ENCODE measurements at regions of chr1 and their contacts with region 1.

Region 1: GRCh38 chr1:29181413-29182225 is at the start of gene SRSF4:
- DNase-seq: peak; percentile 98
- ATAC-seq: peak; percentile 91
- H3K4me3 ChIP-seq: peak within 1 kb of the TSS; percentile 90
- H3K27ac ChIP-seq: peak within 1 kb of the TSS; percentile 91
- H3K4me1 ChIP-seq: peaks cover 19% of the 10 kb centered on the region
- H3K27me3 ChIP-seq: no peaks in the 10 kb centered on the region
- CTCF ChIP-seq: peak; percentile 69
- total RNA-seq, gene SRSF4: 62.0 and 78.2 TPM in 2 replicates

Region 2: DNA sequence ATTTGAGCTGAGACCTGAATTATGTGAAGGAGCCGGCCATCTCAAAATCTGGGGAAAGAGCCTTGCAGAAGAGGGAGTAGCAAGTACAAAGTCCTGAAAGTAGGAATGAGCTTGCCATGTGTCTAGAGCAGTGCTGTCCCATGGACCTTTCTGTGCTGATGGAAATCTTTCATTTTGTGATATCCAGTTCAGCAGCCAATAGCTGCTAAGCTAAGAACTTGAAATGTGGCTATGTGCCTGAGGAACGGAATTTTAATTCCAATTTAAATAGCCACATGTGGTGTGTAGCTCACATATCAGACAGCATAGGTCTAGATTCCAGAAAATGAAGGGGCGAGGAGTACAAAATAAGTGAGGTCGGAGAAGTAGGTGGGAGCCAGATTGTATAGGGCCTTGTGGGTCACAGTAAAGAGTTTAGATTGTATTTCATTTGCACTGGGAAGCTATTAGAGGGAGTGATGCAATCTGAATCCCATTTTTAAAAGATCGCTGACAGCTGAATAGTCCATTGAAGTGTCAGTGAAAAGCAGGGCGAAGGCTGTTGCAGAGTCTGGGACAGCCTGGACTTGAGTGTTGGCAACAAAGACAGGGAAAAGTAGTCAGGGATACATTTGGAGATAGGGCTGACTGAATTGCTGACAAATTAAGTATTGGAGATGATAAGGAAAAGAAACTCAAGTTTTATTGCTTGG is 138.2 kb before region 1 on chr1:
- CTCF ChIA-PET with region 1: no interaction called
- POLR2A ChIA-PET with region 1: no interaction called
- intact Hi-C with region 1: loop called (anchors 10 kb)
- DNase-seq: no peak
- ATAC-seq: no peak
- H3K4me3 ChIP-seq: no peak overlapping the region
- H3K27ac ChIP-seq: no peak overlapping the region
- H3K4me1 ChIP-seq: no peaks in the 10 kb centered on the region
- H3K27me3 ChIP-seq: no peaks in the 10 kb centered on the region
- CTCF ChIP-seq: no peak

Region 3: GRCh38 chr1:29124366-29125236 is 57.0 kb before region 1 on chr1:
- CTCF ChIA-PET with region 1: interaction called, 4 read pairs
- POLR2A ChIA-PET with region 1: interaction called, 4 read pairs
- intact Hi-C with region 1: loop called (anchors 5 kb)
- DNase-seq: peak; percentile 58
- ATAC-seq: peak; percentile 32
- H3K4me3 ChIP-seq: peak overlapping the region; percentile 79
- H3K27ac ChIP-seq: no peak overlapping the region
- H3K4me1 ChIP-seq: peaks cover 18% of the 10 kb centered on the region
- H3K27me3 ChIP-seq: no peaks in the 10 kb centered on the region
- CTCF ChIP-seq: peak; percentile 53

Region 4: GRCh38 chr1:29197585-29197924 is 15.9 kb after region 1 on chr1:
- CTCF ChIA-PET with region 1: interaction called, 14 read pairs
- POLR2A ChIA-PET with region 1: interaction called, 12 read pairs
- intact Hi-C with region 1: loop called (anchors 1 kb)
- DNase-seq: peak; percentile 60
- ATAC-seq: peak; percentile 92
- H3K4me3 ChIP-seq: no peak overlapping the region
- H3K27ac ChIP-seq: no peak overlapping the region
- H3K4me1 ChIP-seq: peaks cover 12% of the 10 kb centered on the region
- H3K27me3 ChIP-seq: no peaks in the 10 kb centered on the region
- CTCF ChIP-seq: peak; percentile 67

Region 5: DNA sequence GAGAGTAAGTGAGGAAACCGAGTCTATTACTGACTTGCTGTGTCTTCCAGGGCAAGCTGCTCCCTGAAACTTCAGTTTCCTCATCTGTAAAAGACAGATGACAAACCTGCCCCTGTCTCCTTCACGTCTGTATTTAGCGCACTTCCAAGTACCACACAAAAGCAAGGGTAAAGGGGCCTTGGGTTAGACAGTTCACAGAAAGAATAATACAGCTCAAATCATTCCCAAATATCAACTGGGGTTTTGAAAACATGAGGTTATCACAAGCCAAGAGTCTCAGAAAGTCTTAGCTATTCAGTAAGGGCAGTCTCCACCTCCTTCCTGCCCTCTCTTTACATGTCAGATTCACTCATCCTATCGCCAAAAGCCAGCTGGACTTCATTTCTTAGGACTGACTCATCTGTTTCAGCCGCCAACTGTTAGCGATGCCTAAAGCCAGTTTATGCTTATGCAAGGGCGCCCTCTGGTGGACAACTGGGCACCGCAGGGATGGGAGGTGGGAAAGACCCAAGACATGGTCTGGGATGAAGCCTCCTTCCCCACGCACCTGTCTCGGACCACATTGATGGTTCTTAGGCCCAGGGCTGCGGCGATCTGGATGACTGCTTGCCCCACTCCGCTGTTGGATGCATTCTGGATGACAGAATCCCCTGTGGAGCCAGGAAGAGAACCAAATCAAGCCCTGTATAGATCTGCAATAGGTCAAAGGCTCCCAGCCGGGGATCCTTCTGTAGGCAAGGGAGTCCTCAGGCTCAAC is 21.1 kb after region 1 on chr1:
- CTCF ChIA-PET with region 1: interaction called, 14 read pairs
- POLR2A ChIA-PET with region 1: interaction called, 12 read pairs
- intact Hi-C with region 1: loop called (anchors 1 kb)
- DNase-seq: peak; percentile 99
- ATAC-seq: peak; percentile 96
- H3K4me3 ChIP-seq: peak overlapping the region; percentile 36; the same call in 1 of the 2 replicates
- H3K27ac ChIP-seq: peak overlapping the region; percentile 42
- H3K4me1 ChIP-seq: peaks cover 17% of the 10 kb centered on the region
- H3K27me3 ChIP-seq: no peaks in the 10 kb centered on the region
- CTCF ChIP-seq: peak; percentile 96

Region 6: DNA sequence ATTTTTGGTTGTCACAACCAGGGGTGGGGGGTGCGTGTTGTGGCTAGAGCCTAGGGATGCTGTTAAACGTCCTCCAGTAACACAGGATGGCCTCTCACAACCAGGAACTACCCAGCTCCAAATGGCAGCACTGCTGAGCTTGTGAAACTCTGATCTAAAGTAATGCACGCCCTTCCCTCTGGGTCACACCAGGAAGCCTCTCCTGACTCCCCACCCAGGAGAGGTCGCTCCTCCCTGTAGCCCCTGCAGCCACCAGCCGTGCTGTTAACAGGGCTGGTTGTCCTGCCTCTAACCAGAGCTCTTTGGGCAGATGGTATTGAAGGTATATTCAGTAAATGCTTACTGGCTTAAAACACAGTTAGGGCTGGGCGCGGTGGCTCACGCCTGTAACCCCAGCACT is 1984.8 kb after region 1 on chr1:
- CTCF ChIA-PET with region 1: interaction called, 10 read pairs
- POLR2A ChIA-PET with region 1: no interaction called
- intact Hi-C with region 1: no loop called
- DNase-seq: no peak
- ATAC-seq: no peak
- H3K4me3 ChIP-seq: no peak overlapping the region
- H3K27ac ChIP-seq: no peak overlapping the region
- H3K4me1 ChIP-seq: peaks cover 10% of the 10 kb centered on the region
- H3K27me3 ChIP-seq: no peaks in the 10 kb centered on the region
- CTCF ChIP-seq: no peak

Measured in PC-3 (cell line).